ENCODE measurements at regions of chr12 and their contacts with region 1.

Region 1: DNA sequence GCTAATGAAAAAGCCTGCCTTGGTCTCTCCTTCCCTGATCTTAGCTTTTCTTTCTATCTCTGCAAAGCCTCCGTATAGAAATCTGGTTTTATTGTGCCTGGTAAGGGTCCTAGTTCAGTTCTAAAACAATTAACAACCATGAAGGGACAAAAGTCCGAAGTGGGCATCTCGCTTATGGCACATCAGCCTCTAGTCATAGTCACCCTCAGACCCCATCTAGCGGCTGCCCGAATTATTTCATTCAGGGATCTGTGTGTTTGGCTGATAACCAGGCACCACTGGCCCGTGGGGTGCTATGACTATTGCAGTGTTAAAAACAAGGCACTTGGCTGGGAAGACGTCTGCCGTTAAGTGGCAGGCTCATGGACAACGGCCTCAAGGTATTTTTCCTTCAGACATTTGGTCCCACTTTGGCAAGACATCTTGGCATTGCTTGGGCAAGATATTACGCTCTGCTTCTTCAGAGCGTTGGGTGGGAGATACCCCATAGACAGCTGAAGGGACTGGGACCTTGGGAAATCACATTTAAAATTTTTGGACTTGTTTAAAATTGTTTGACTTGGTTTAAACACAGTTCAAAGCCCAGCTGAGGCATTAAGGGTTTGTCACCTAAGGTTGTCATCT is 87.1 kb downstream of the SINHCAF start:
- DNase-seq: peak; percentile 23
- ATAC-seq: peak; percentile 85
- H3K4me3 ChIP-seq: no peak overlapping the region
- H3K27ac ChIP-seq: no peak overlapping the region
- H3K4me1 ChIP-seq: peaks cover 12% of the 10 kb centered on the region
- H3K27me3 ChIP-seq: no peaks in the 10 kb centered on the region; a peak in 1 of 4 replicates
- CTCF ChIP-seq: peak; percentile 76 to 81 (median 77)
- EP300 ChIP-seq: no peak
- POLR2A ChIP-seq: no peak
- RAD21 ChIP-seq: peak; percentile 82

Region 2: GRCh38 chr12:31117203-31118011 is 121.5 kb before region 1 on chr12:
- CTCF ChIA-PET with region 1: interaction called, 30 read pairs
- POLR2A ChIA-PET with region 1: no interaction called
- RAD21 ChIA-PET with region 1: interaction called, 3 read pairs
- SMC1A ChIA-PET with region 1: no interaction called
- in situ Hi-C with region 1: loop called (anchors 5 kb)
- intact Hi-C with region 1: loop called (anchors 2 kb)
- DNase-seq: no peak
- ATAC-seq: peak; percentile 95
- H3K4me3 ChIP-seq: peak overlapping the region; percentile 65; the same call in 1 of the 2 replicates
- H3K27ac ChIP-seq: no peak overlapping the region
- H3K4me1 ChIP-seq: peaks cover 3% of the 10 kb centered on the region
- H3K27me3 ChIP-seq: no peaks in the 10 kb centered on the region; a peak in 1 of 4 replicates
- CTCF ChIP-seq: peak; percentile 56 to 82 (median 69)
- EP300 ChIP-seq: no peak
- POLR2A ChIP-seq: no peak
- RAD21 ChIP-seq: peak; percentile 62

Region 3: DNA sequence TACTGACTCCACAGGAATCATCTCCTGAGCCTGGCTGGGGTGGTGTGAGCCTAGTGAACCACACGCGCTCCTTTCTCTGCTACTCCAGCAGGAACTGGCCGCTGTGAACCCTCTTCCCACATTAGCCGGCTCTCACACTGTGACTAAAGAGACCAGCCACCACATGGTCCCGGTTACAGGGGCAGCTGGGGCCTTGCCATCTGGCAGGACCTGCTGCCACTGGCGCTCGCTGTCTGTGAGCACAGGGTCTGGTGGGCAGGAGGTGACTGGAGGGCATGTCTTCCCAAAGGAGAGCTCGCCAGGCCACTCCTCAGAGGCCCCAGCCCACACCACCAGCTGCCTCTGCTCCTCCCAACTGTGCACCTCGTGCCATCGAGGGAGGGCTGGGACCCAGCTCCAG is 12.2 kb before region 1 on chr12:
- CTCF ChIA-PET with region 1: interaction called, 13 read pairs
- POLR2A ChIA-PET with region 1: no interaction called
- RAD21 ChIA-PET with region 1: interaction called, 3 read pairs
- SMC1A ChIA-PET with region 1: interaction called, 3 read pairs
- in situ Hi-C with region 1: no loop called
- intact Hi-C with region 1: no loop called
- DNase-seq: no peak
- ATAC-seq: no peak
- H3K4me3 ChIP-seq: no peak overlapping the region
- H3K27ac ChIP-seq: no peak overlapping the region
- H3K4me1 ChIP-seq: no peaks in the 10 kb centered on the region
- H3K27me3 ChIP-seq: no peaks in the 10 kb centered on the region
- CTCF ChIP-seq: no peak
- EP300 ChIP-seq: no peak
- POLR2A ChIP-seq: no peak
- RAD21 ChIP-seq: no peak